Heart right ventricle (tissue), 16 donors: ENCODE measurements at regions of chr11 and their contacts with region 1.

Region 1: DNA sequence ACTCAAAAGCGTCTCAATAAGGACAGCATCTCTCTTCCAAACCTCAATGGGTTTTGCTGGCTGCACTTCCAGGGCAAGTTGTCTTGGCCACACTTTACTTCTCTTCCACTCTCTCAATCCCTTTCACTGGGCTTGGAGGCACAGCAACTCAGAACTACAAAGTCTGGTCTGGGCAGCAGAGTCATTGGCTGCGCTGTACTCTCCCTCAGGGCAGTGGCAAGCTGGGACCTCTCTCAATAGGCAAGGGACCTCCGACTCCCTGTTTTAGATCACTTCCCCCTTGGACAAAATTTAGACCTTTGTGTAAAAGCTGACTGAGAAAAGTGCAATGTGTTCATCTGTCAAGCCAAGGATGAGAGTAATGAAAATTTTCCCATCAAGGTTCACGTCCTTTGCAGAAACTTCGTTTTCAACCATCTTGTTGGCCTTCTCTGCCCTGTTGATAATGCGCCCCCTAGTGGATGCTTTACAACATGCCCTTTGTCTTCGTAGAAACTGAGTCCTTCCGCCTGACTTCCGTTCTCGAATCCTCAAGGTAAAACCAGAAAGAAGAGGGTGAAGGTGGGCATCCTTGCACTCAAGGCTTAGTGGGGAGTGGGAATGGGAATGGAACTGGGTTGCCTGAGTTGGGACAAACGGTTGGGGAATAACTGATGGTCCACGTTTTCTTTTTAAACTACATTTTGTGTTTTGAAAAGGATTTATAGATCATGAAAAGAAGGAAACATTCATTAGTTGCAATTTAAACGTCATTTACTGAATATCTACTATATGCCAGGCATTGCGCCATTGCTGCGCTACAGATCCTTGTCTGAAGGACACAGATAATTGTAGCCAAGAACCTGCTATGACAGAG is 99.1 kb downstream of the CD44 start:
- DNase-seq: peak in 1 of 2 donors; percentile 62
- ATAC-seq: peak in 4 of 8 donors; percentile 28 to 72 (median 48)
- H3K4me3 ChIP-seq: no peak overlapping the region
- H3K27ac ChIP-seq: peak overlapping the region in 1 of 10 donors; percentile 77
- H3K4me1 ChIP-seq: peaks cover 0 to 43% (median 0%) of the 10 kb centered on the region in 9 donors
- H3K27me3 ChIP-seq: no peaks in the 10 kb centered on the region
- CTCF ChIP-seq: peak; percentile 60 to 84 (median 75)

Region 2: DNA sequence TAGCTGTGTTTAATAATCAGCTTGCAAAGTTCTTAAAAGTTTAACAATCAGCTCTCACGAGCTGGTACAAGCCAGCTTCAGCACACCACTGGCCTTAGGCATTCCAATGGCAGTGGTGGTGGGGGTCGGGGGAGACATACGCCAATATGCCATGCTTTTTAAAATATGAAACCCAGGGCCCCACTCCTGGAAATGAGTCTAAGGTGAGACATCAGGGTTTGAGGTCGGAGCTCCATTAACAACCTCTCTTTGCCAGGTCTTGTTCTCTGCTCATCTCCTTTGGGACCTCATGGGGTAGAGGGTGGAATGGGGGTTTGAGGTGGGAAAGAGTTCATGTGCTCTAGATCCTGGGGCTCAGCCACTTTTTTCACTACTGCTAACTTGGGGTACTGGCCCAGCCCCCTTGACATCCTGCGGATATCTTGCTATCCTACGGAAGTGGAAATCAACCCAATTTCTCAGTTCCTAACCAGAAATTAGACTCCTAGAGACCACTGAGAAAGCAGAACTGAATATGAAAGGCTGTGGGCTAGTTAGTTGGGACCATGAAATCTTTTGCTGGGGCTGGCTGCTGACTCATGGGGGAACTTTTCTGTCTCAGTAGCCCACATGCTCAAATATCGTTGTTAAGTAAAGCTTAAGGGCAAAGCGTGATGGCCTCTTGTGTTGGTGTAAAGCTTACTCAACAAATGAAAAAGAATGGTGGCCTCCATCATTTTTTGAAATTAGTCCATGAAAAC is 231.5 kb before region 1 on chr11:
- intact Hi-C with region 1: loop called in 3 of 10 experiments (anchors 5 kb)
- DNase-seq: no peak
- ATAC-seq: peak in 1 of 8 donors; percentile 38
- H3K4me3 ChIP-seq: no peak overlapping the region
- H3K27ac ChIP-seq: no peak overlapping the region
- H3K4me1 ChIP-seq: peaks cover 0 to 20% (median 0%) of the 10 kb centered on the region in 9 donors
- H3K27me3 ChIP-seq: no peaks in the 10 kb centered on the region
- CTCF ChIP-seq: no peak